ENCODE measurements at regions of chr5 and their contacts with region 1.

Region 1: DNA sequence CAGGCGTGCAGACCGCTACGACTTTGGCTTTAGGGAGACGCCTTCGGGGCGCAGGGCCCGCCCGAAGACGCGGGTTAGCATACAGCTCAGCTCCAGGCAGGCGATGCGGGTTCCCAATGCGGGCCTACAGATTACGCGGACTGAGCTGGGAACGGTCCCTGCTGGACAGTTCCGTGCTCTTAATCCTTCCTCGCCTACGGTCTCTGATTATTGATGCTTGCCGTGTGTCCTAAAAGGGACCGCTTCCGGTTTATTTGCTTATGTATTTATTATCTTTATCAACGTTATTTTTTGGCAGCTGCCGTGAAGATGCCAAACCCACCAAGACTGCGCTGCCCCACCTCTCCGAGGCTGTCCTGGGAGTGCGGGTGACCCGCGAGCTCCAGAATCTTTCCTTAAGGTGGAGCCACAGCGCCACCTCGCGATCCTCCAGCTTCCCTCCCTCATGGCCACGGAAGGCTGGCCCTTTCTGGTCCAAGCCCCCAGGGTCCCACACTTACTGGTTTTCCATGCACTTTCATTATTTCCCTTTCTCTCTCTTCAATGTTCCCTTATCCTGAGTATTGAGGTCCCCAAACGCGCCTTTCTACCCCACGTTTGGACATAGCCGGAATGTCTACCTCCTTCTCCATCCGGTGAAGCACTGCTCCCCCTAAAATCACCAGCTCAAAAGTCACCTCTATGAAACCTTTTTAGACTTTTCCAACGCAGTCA is 7.0 kb upstream of the EBF1 start:
- DNase-seq: peak; percentile 77 to 91 (median 86)
- H3K4me3 ChIP-seq: peak overlapping the region; percentile 28
- H3K27ac ChIP-seq: no peak overlapping the region
- H3K4me1 ChIP-seq: peaks cover 9% of the 10 kb centered on the region
- H3K27me3 ChIP-seq: no peaks in the 10 kb centered on the region
- CTCF ChIP-seq: peak; percentile 64 to 96 (median 89)
- EP300 ChIP-seq: no peak
- POLR2A ChIP-seq: peak; percentile 25

Region 2: GRCh38 chr5:158026304-158027031 is 1080.3 kb before region 1 on chr5:
- intact Hi-C with region 1: loop called in 1 of 4 experiments (anchors 10 kb)
- DNase-seq: peak in 2 of 5 donors; percentile 19 to 21
- H3K4me3 ChIP-seq: no peak overlapping the region
- H3K27ac ChIP-seq: peak overlapping the region in 1 of 2 donors; percentile 48
- H3K4me1 ChIP-seq: peaks cover 6% of the 10 kb centered on the region
- H3K27me3 ChIP-seq: no peaks in the 10 kb centered on the region
- CTCF ChIP-seq: no peak
- EP300 ChIP-seq: no peak
- POLR2A ChIP-seq: no peak

Region 3: GRCh38 chr5:158174918-158175851 is 931.5 kb before region 1 on chr5:
- intact Hi-C with region 1: loop called (anchors 1 to 5 kb)
- DNase-seq: peak; percentile 83 to 90 (median 83)
- H3K4me3 ChIP-seq: no peak overlapping the region
- H3K27ac ChIP-seq: peak overlapping the region in 1 of 2 donors; percentile 1
- H3K4me1 ChIP-seq: peaks cover 4% of the 10 kb centered on the region
- H3K27me3 ChIP-seq: no peaks in the 10 kb centered on the region
- CTCF ChIP-seq: peak; percentile 58 to 91 (median 78)
- EP300 ChIP-seq: no peak
- POLR2A ChIP-seq: no peak

Region 4: GRCh38 chr5:158695595-158696330 is 411.0 kb before region 1 on chr5:
- intact Hi-C with region 1: loop called (anchors 2 to 5 kb)
- DNase-seq: peak; percentile 66 to 87 (median 83)
- H3K4me3 ChIP-seq: no peak overlapping the region
- H3K27ac ChIP-seq: no peak overlapping the region
- H3K4me1 ChIP-seq: peaks cover 10% of the 10 kb centered on the region
- H3K27me3 ChIP-seq: no peaks in the 10 kb centered on the region
- CTCF ChIP-seq: peak; percentile 82 to 96 (median 91)
- EP300 ChIP-seq: no peak
- POLR2A ChIP-seq: no peak

Region 5: GRCh38 chr5:158880483-158881001 is 226.2 kb before region 1 on chr5:
- intact Hi-C with region 1: loop called in 1 of 4 experiments (anchors 10 kb)
- DNase-seq: no peak
- H3K4me3 ChIP-seq: no peak overlapping the region
- H3K27ac ChIP-seq: no peak overlapping the region
- H3K4me1 ChIP-seq: peaks cover 16% of the 10 kb centered on the region
- H3K27me3 ChIP-seq: no peaks in the 10 kb centered on the region
- CTCF ChIP-seq: no peak
- EP300 ChIP-seq: no peak
- POLR2A ChIP-seq: no peak